ENCODE measurements at regions of chr9 and their contacts with region 1.

Region 1: GRCh38 chr9:21381448-21382339 is 3.5 kb downstream of the IFNA2 start:
- DNase-seq: no peak
- ATAC-seq: no peak
- H3K4me3 ChIP-seq: no peak overlapping the region
- H3K27ac ChIP-seq: no peak overlapping the region
- H3K4me1 ChIP-seq: no peaks in the 10 kb centered on the region
- H3K27me3 ChIP-seq: peaks cover 2 to 28% (median 4%) of the 10 kb centered on the region in 3 donors
- CTCF ChIP-seq: no peak

Region 2: DNA sequence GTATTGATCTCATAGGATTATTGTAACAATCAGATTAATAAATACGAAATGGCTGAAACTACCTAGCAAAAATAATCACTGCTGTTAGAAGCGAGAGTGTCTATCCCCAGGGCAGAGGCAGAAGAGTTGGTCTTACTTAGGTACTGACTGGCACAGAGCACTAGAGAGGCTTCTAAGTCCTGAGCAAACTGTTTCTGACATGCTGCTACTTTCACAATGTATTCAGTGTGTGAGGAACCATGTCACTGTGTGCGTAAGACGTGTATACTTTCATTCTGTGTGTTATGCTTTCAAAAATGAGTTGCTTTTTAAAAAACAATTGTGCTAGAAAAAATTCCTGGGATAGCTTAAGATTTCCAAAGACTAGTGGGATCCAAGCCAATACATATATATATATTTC is 41.0 kb before region 1 on chr9:
- intact Hi-C with region 1: no loop called
- DNase-seq: no peak
- ATAC-seq: no peak
- H3K4me3 ChIP-seq: no peak overlapping the region
- H3K27ac ChIP-seq: no peak overlapping the region
- H3K4me1 ChIP-seq: no peaks in the 10 kb centered on the region
- H3K27me3 ChIP-seq: no peaks in the 10 kb centered on the region
- CTCF ChIP-seq: no peak

Region 3: DNA sequence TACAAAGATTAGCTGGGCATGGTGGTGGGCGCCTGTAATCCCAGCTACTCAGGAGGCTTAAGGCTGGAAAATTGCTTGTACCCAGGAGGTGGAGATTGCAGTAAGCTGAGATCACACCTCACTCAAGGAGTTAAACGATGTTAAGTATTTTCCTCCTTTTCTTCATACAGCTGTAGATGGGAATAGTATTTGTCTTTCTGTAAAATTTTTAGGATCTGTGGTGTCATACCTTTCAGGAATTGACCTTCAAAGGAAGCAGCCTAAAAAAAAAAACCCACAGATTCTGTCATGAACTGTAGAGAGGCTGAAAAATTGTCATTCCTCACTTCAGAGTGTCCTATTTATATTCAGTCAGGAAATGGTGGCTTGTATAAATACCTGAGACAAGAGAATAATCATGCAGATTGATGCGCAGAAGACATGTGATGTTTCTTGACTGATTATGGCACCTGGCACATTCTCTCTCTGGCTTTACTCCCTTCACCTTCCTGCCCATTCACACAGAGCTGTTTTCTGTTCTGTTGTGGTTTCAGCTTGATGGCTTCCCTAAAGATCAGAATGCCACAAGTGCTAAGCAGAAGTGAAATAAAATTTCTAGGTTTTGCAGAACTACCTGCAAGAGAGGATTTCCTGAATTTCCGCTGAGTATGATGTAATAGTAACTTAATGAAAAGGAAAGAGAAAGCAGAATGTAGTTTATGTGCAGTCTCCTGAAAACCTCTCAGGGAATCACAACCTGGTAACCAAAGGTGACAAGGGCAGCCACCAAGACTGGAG is 62.3 kb after region 1 on chr9:
- intact Hi-C with region 1: loop called in 1 of 2 experiments (anchors 10 kb)
- DNase-seq: no peak
- ATAC-seq: no peak
- H3K4me3 ChIP-seq: no peak overlapping the region
- H3K27ac ChIP-seq: no peak overlapping the region
- H3K4me1 ChIP-seq: no peaks in the 10 kb centered on the region
- H3K27me3 ChIP-seq: no peaks in the 10 kb centered on the region
- CTCF ChIP-seq: no peak

Region 4: DNA sequence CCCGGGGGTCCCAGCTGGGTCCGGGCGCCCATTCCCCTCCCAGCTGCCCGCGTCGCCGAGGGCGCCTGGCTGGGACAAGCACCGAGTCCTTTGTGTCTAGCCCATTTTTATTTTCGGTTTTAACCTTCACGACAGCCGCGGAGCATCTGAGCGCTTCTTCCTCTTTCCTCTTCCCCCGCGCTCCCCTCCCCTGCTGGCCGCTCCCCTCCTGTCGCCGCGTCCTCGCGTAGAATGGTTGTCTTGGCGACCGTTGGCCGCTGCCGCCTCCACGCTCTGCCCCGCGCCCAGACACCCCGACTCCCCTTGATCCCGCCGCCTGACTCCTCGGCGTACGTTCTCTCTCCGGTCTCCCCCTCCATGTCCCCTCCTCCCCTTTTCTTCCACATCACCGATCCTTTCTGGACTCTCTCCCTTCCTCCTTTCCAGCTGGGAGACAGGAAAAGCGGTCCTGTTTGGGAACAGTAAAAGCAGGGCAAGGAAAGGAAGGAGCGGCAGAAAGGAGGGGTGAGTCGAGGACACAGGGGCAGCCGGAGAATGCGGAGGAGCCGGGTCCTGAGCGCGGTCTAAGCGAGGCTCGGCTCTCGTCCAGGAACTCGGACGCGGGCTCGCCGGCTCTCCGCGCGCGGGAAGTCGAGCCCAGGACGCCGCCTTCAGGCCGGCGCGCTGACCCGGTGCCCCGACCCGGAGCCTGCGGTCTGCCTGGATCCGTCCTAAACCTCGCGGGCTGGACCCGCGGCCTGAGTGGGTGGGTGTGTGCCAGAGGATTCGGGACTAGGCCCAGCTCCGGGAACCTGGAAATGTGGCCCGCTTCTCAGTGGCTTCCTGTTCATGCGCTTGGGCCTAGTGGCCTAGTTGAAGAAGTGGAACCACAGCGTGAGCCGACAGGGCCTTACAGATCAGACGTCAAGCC is 613.7 kb after region 1 on chr9:
- intact Hi-C with region 1: no loop called
- DNase-seq: peak; percentile 74 to 84
- ATAC-seq: peak; percentile 65 to 86 (median 74)
- H3K4me3 ChIP-seq: peak overlapping the region; percentile 98
- H3K27ac ChIP-seq: peak overlapping the region; percentile 60
- H3K4me1 ChIP-seq: peaks cover 5% of the 10 kb centered on the region
- H3K27me3 ChIP-seq: peaks cover 0 to 21% (median 7%) of the 10 kb centered on the region in 3 donors
- CTCF ChIP-seq: no peak

Measured in psoas muscle (tissue), 8 donors.